ENCODE measurements at regions of chr20 and their contacts with region 1.

Region 1: GRCh38 chr20:20875716-20876115 is 163.3 kb upstream of the RALGAPA2 start:
- DNase-seq: no peak

Region 2: DNA sequence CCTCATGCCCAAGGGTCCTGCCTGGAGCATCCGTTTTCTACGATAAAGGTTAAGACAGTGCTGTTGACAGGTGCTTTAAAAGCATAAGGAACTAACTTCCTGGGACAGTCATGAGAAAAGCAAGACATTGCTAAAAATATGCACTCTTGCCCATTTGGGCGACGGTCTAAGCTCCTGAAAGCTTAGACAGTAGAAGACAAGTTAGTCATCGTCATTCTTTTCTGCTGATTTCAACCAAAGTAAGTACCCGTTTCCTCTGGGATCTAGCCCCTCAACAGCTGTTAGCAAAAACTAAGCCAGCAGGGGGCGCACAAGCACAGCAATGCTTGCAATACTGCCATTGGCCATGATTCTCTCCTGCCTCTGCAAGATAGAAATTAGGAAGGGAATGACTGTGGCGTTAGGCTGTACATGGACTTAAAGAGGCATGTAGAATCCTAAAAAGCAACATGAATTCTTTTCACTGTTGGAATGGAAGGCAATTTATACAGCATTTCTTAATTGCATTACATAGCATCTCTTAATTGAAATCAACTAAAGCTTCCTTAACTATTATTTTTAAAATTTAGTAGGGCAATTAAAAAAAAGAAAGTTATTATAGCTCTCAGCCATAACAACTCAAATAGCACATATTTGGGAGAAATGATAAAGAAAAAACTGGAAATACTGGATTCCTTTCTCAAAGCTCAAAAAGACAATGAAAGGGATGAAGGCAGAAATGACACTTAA is 15.5 kb before region 1 on chr20:
- intact Hi-C with region 1: loop called in 1 of 2 experiments (anchors 1 kb)
- DNase-seq: peak; percentile 96

Region 3: GRCh38 chr20:21577551-21577950 is 701.8 kb after region 1 on chr20:
- intact Hi-C with region 1: loop called in 1 of 2 experiments (anchors 5 kb)
- DNase-seq: no peak